ENCODE measurements at regions of chr1 and their contacts with region 1.

Region 1: DNA sequence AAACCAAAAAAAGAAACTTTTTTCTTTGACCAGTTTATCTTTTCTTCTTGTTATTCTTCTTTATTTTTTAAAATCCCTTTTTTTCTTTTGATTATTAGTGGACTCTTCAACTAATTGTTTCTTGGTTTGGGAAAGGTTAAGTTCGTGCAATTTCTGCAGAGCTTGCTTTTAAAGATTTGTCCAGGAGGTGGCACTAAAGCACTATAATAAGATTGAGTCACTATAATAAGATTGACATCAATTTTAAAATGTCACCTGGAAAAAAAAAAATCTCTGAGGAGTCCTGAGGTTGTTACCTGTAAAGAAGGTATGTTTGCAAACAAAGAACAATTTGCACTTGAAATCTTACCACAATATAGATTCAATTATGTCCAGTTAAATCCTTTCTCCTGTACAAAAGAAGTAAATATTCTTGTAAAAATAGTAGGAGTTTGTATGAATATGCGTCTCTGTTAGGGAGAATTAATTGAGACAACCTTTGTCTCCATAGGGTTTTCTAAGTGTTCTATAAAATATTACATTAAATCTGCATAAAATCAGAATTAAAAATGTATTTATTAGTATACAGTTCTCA is 166.7 kb downstream of the ADGRL4 start:
- DNase-seq: no peak
- H3K4me3 ChIP-seq: no peak overlapping the region
- H3K27ac ChIP-seq: no peak overlapping the region
- H3K4me1 ChIP-seq: peaks cover 0 to 3% (median 0%) of the 10 kb centered on the region in 6 donors
- H3K27me3 ChIP-seq: no peaks in the 10 kb centered on the region
- CTCF ChIP-seq: peak in 10 of 11 experiments; percentile 28 to 76 (median 62)
- POLR2A ChIP-seq: no peak

Region 2: DNA sequence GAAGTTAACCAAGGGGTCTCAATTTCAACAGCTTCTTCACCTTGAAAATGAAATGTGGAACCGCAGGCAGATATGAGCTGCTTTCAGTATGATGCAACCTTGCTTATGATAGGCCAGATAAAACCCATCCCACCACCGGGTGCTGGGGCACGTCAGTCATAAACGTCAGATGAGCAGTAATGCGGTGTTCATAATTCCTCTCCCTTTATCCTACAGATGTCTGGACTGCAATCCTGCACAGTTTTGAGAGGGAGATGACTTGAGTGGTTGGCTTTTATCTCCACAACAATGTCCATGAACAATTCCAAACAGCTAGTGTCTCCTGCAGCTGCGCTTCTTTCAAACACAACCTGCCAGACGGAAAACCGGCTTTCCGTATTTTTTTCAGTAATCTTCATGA is 347.3 kb before region 1 on chr1:
- intact Hi-C with region 1: no loop called
- DNase-seq: no peak
- H3K4me3 ChIP-seq: no peak overlapping the region
- H3K27ac ChIP-seq: peak overlapping the region in 1 of 8 donors; percentile 75
- H3K4me1 ChIP-seq: peaks cover 0 to 15% (median 0%) of the 10 kb centered on the region in 6 donors
- H3K27me3 ChIP-seq: peaks cover 0 to 31% (median 6%) of the 10 kb centered on the region in 7 donors
- CTCF ChIP-seq: no peak
- POLR2A ChIP-seq: no peak

Region 3: DNA sequence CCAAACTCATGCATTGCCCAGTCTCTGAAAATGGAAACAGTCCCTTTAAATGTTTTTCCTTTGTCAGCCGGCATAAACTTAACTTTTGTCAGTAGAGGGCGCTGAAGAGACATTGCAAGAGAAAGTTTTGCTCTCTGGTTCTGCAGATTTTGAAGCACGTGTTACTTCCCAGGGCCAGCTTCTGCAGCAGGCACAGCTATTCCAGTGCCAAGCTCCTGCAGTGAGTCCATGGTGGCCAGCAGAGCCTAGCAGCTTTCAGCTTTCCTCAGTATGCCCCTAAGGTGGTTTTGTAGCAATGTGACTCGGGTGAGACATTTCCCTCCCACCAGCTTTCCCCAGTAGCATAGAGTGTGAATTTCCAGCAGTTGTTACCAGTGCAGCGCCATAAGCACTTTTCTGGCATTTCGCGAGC is 222.2 kb before region 1 on chr1:
- intact Hi-C with region 1: no loop called
- DNase-seq: peak; percentile 79
- H3K4me3 ChIP-seq: peak overlapping the region in 1 of 8 donors; percentile 24
- H3K27ac ChIP-seq: peak overlapping the region in 3 of 8 donors; percentile 30 to 91 (median 84)
- H3K4me1 ChIP-seq: peaks cover 5 to 56% (median 43%) of the 10 kb centered on the region in 6 donors
- H3K27me3 ChIP-seq: no peaks in the 10 kb centered on the region
- CTCF ChIP-seq: peak; percentile 50 to 90 (median 80)
- POLR2A ChIP-seq: no peak

Region 4: GRCh38 chr1:79197421-79197820 is 357.6 kb after region 1 on chr1:
- intact Hi-C with region 1: loop called (anchors 5 kb)
- DNase-seq: no peak
- H3K4me3 ChIP-seq: no peak overlapping the region
- H3K27ac ChIP-seq: no peak overlapping the region
- H3K4me1 ChIP-seq: peaks cover 0 to 6% (median 0%) of the 10 kb centered on the region in 6 donors
- H3K27me3 ChIP-seq: no peaks in the 10 kb centered on the region
- CTCF ChIP-seq: peak in 9 of 11 experiments; percentile 31 to 60 (median 48)
- POLR2A ChIP-seq: no peak

Measured in spleen (tissue), 13 donors.